T-cell (primary cell): ENCODE measurements at regions of chr12 and their contacts with region 1.

Region 1: GRCh38 chr12:6699989-6700645 is 498 bp downstream of the PIANP start:
- DNase-seq: peak in 6 of 35 experiments; percentile 5 to 30 (median 16)
- ATAC-seq: peak; percentile 52 to 58 (median 54)
- H3K4me3 ChIP-seq: peak overlapping the region; percentile 36 to 51
- H3K4me3 Mint-ChIP-seq: peak overlapping the region; percentile 53 to 80 (median 72)
- H3K27ac ChIP-seq: no peak overlapping the region
- H3K27ac Mint-ChIP-seq: no peak overlapping the region
- H3K4me1 ChIP-seq: peaks cover 7 to 23% of the 10 kb centered on the region in 2 experiments
- H3K4me1 Mint-ChIP-seq: peaks cover 18 to 42% (median 20%) of the 10 kb centered on the region in 3 donors
- H3K27me3 ChIP-seq: peaks cover 23 to 66% of the 10 kb centered on the region in 2 experiments
- H3K27me3 Mint-ChIP-seq: peaks cover 41 to 57% of the 10 kb centered on the region in 2 donors

Region 2: GRCh38 chr12:6723607-6724396 is 23.7 kb after region 1 on chr12 and contains the start of gene COPS7A:
- CTCF ChIA-PET with region 1: interaction called in 1 of 2 experiments, 8 read pairs
- POLR2A ChIA-PET with region 1: interaction called in 1 of 2 experiments, 14 read pairs
- DNase-seq: peak; percentile 85 to 96 (median 90)
- ATAC-seq: peak; percentile 90
- H3K4me3 ChIP-seq: peak within 1 kb of the TSS; percentile 58 to 65
- H3K4me3 Mint-ChIP-seq: peak within 1 kb of the TSS; percentile 84 to 87 (median 84)
- H3K27ac ChIP-seq: peak within 1 kb of the TSS; percentile 83
- H3K27ac Mint-ChIP-seq: peak within 1 kb of the TSS; percentile 91 to 99
- H3K4me1 ChIP-seq: peaks cover 10 to 16% of the 10 kb centered on the region in 2 experiments
- H3K4me1 Mint-ChIP-seq: peaks cover 24 to 30% (median 29%) of the 10 kb centered on the region in 3 donors
- H3K27me3 ChIP-seq: no peaks in the 10 kb centered on the region
- H3K27me3 Mint-ChIP-seq: no peaks in the 10 kb centered on the region
- total RNA-seq, gene COPS7A: 18.5 to 33.1 (median 31.8) TPM